GM12878 (cell line): ENCODE measurements at regions of chr15 and their contacts with region 1.

Region 1: DNA sequence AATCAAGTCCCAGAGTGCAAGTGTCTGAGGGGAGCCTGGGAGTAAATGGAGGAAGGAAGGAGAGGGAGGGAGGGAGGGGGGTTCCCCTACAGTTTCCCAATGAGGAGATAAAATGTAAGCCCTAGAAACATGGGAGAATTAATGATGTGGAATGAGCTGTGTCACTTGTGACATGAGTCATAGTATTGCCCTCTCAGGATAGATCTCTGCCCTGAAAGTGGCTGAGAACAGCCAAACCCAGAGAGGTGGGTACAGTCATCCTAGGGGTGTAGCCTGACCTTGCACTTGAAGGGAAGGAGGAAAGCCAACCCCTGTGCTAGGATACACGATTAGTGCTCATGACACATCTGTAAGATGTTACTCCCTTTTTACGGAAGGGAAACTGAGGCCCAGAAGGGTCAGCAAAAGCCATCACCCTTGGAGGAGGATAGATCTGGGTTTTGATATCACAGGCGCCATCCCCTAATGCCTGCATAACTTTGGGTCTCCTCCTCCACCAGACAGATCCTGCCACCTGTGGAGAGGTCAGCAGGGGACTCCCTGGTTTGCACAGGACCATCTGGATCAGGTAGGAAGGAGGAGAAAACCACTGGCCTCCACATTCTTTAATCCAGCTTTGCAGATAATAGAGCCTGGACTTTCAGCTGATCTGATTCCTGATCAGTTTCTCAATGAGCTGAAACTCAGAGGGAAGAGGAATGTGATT is 23.1 kb upstream of the USP3 start:
- DNase-seq: peak; percentile 83
- ATAC-seq: peak; percentile 60
- H3K4me3 ChIP-seq: no peak overlapping the region
- H3K27ac ChIP-seq: peak overlapping the region; percentile 77
- H3K4me1 ChIP-seq: peaks cover 88% of the 10 kb centered on the region
- H3K27me3 ChIP-seq: no peaks in the 10 kb centered on the region
- CTCF ChIP-seq: 0 out of 6 replicates have a peak, but pooled peaks of 1 of the 3 experiments have one; percentile 4
- EP300 ChIP-seq: 0 out of 4 replicates have a peak, but pooled peaks of 1 of the 2 experiments have one; percentile 23
- POLR2A ChIP-seq: no peak
- RAD21 ChIP-seq: no peak

Region 2: DNA sequence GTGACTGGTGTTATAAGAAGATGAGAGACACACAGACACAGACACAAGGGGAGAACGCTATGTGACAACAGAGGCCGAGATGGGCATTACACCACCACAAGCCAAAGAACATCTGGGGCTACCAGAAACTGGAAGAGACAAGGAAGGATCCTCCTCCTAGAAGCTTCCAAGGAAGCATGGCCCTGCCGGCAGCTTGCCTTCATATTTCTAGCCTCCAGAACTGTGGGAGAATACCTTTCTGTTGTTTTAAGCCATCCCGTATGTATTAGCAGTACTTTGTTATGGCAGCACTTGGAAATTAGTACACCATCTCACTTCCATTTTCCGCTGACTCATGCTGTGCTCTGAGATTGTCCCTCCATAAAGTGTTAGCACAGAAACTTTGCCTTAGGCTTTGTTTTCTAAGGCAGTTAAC is 60.9 kb before region 1 on chr15:
- CTCF ChIA-PET with region 1: no interaction called
- POLR2A ChIA-PET with region 1: no interaction called
- RAD21 ChIA-PET with region 1: no interaction called
- SMC1A ChIA-PET with region 1: no interaction called
- in situ Hi-C with region 1: no loop called
- intact Hi-C with region 1: no loop called
- DNase-seq: no peak
- ATAC-seq: peak; percentile 44; the same call in 2 of the 3 replicates
- H3K4me3 ChIP-seq: no peak overlapping the region
- H3K27ac ChIP-seq: no peak overlapping the region
- H3K4me1 ChIP-seq: no peaks in the 10 kb centered on the region
- H3K27me3 ChIP-seq: no peaks in the 10 kb centered on the region
- CTCF ChIP-seq: no peak
- EP300 ChIP-seq: no peak
- POLR2A ChIP-seq: no peak
- RAD21 ChIP-seq: no peak

Region 3: DNA sequence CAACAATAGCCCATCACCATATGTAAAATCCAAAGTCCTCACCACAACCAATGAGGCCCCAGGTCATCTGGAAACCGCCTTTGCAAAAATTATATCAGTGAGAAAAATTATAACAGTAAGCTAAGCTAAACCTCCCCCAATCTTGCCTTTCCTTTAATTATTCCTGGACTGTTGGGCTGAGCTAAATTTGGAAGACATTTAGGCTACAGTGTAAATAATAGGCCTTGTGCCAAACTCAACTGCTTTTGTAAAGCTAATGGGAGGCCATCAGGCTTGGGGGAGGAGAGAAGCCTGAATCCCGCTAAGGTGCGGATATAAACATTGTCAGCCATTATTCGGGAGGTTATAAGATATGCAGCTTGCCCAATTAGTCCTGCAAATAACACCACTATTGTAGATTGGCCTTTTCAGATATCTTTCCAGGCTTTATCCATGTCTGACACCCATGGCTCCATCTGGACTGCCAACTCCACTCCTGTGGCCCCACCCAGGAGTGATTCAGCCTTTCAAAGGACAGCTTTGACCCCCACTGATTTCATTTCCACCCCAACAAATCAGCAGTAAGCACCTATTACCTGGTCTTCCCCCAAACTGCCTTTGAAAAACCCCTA is 46.6 kb before region 1 on chr15:
- CTCF ChIA-PET with region 1: no interaction called
- POLR2A ChIA-PET with region 1: no interaction called
- RAD21 ChIA-PET with region 1: no interaction called
- SMC1A ChIA-PET with region 1: no interaction called
- in situ Hi-C with region 1: no loop called
- intact Hi-C with region 1: no loop called
- DNase-seq: no peak
- ATAC-seq: no peak
- H3K4me3 ChIP-seq: no peak overlapping the region
- H3K27ac ChIP-seq: no peak overlapping the region
- H3K4me1 ChIP-seq: peaks cover 5% of the 10 kb centered on the region; the same call in 1 of the 2 replicates
- H3K27me3 ChIP-seq: no peaks in the 10 kb centered on the region
- CTCF ChIP-seq: no peak
- EP300 ChIP-seq: no peak
- POLR2A ChIP-seq: no peak
- RAD21 ChIP-seq: no peak

Region 4: DNA sequence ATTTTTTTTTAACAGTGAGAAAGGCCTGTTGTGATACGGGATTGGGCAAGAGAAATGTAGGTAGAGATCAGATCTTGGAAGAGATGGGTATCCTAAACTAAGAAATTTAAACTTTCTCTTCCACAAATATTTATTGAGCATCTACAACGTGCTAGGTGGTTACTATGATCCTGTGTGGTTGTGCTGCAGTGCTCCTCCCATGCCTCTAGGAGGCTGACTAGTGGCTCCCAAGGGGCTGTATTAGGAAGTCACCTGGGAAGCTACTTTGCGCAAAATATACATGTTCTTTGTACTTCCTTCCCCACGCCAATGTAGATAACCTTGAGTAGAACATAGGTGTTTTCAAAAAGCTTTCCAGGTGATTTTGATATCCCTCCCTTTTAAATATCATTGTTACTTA is 50.3 kb after region 1 on chr15:
- CTCF ChIA-PET with region 1: interaction called, 6 read pairs
- POLR2A ChIA-PET with region 1: interaction called, 7 read pairs
- RAD21 ChIA-PET with region 1: interaction called, 9 read pairs
- SMC1A ChIA-PET with region 1: interaction called, 18 read pairs
- in situ Hi-C with region 1: no loop called
- intact Hi-C with region 1: no loop called
- DNase-seq: no peak
- ATAC-seq: peak; percentile 10; the same call in 1 of the 3 replicates
- H3K4me3 ChIP-seq: no peak overlapping the region
- H3K27ac ChIP-seq: no peak overlapping the region
- H3K4me1 ChIP-seq: peaks cover 51% of the 10 kb centered on the region
- H3K27me3 ChIP-seq: no peaks in the 10 kb centered on the region
- CTCF ChIP-seq: peak in 2 of 3 experiments; percentile 21 to 39; a peak in 2 of 6 replicates
- EP300 ChIP-seq: no peak
- POLR2A ChIP-seq: no peak
- RAD21 ChIP-seq: no peak

Region 5: GRCh38 chr15:63539521-63539920 is 58.3 kb after region 1 on chr15:
- CTCF ChIA-PET with region 1: interaction called, 6 read pairs
- POLR2A ChIA-PET with region 1: interaction called, 9 read pairs
- RAD21 ChIA-PET with region 1: interaction called, 8 read pairs
- SMC1A ChIA-PET with region 1: interaction called, 18 read pairs
- in situ Hi-C with region 1: no loop called
- intact Hi-C with region 1: no loop called
- DNase-seq: no peak
- ATAC-seq: no peak
- H3K4me3 ChIP-seq: no peak overlapping the region
- H3K27ac ChIP-seq: no peak overlapping the region
- H3K4me1 ChIP-seq: peaks cover 35% of the 10 kb centered on the region
- H3K27me3 ChIP-seq: no peaks in the 10 kb centered on the region
- CTCF ChIP-seq: no peak
- EP300 ChIP-seq: no peak
- POLR2A ChIP-seq: no peak
- RAD21 ChIP-seq: no peak

Region 6: GRCh38 chr15:63708126-63708772 is 227.0 kb after region 1 on chr15:
- CTCF ChIA-PET with region 1: no interaction called
- POLR2A ChIA-PET with region 1: no interaction called
- RAD21 ChIA-PET with region 1: no interaction called
- SMC1A ChIA-PET with region 1: no interaction called
- in situ Hi-C with region 1: no loop called
- intact Hi-C with region 1: no loop called
- DNase-seq: no peak
- ATAC-seq: no peak
- H3K4me3 ChIP-seq: no peak overlapping the region
- H3K27ac ChIP-seq: no peak overlapping the region
- H3K4me1 ChIP-seq: peaks cover 7% of the 10 kb centered on the region
- H3K27me3 ChIP-seq: no peaks in the 10 kb centered on the region
- CTCF ChIP-seq: no peak
- EP300 ChIP-seq: no peak
- POLR2A ChIP-seq: no peak
- RAD21 ChIP-seq: no peak